ENCODE measurements at regions of chr4 and their contacts with region 1.

Region 1: GRCh38 chr4:77893451-77893850 is 30.8 kb downstream of the MRPL1 start:
- DNase-seq: no peak
- ATAC-seq: no peak

Region 2: GRCh38 chr4:77845929-77846328 is 47.5 kb before region 1 on chr4:
- intact Hi-C with region 1: loop called (anchors 2 kb)
- DNase-seq: no peak
- ATAC-seq: no peak

Region 3: GRCh38 chr4:78337244-78338020 is 444.0 kb after region 1 on chr4:
- intact Hi-C with region 1: no loop called
- DNase-seq: no peak
- ATAC-seq: no peak

Measured in sciatic nerve (tissue), 2 donors.